Activated naive CD4-positive, alpha-beta T cell treated with anti-CD3 and anti-CD28 coated beads for 36 hours (primary cell): ENCODE measurements at regions of chr12 and their contacts with region 1.

Region 1: DNA sequence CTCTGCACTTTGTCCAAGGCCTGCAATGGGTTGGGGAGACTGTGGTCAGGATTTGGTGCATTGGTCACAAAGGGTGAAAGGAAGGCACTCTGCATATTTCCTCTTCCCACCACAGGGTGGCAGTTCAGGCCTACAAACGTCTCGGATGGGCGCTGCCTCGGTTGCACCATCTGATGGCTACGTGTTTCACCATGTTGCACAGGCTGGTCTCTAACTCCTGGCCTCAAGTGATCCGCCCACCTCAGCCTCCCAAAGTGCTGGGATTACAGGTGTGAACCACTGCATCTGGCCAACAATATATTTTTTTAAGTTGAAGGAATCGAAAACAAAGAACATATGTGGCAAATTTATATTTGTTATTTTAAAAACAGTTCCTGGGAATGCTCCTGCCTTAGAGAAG is 35.1 kb downstream of the TMBIM6 start:
- DNase-seq: peak; percentile 80
- H3K4me3 Mint-ChIP-seq: no peak overlapping the region
- H3K27ac Mint-ChIP-seq: no peak overlapping the region
- H3K4me1 Mint-ChIP-seq: peaks cover 6% of the 10 kb centered on the region
- H3K27me3 Mint-ChIP-seq: peaks cover 3% of the 10 kb centered on the region

Region 2: DNA sequence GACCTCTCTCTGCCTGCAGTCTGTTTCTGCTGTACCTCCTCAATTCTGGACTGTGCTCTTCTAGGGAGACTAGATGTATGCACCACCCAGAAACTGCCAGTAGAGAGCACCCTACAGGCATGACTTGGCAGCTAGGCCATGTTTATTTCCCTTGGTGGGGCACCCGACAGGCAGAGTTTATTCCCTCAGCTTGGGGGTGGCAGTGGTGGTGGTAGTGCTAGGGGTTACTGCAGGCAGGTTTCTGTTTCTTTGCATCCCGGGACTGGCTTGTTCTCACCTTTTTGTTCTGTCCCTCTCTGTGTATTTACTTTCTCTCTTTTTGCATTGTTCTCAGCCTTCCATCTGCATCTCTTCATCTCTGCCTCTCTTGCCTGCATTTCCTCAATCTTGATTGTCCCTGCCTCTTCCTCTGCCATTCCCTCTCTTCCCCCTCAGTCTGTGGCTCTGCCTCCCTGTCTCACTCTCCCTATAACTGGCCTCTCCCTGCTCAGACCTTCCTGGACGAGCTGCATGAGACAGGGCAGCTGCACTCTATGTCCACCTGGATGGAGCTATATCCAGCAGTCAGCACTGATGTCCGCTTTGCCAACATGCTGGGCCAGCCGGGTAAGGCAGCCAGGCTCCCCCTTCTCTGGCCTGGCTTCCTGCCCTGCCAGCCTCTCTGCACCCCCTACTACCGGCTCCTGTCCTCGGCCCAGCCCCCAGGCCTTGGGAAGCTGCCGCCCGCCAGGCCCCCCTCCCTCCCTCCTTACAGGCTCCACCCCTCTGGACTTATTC is 139.2 kb before region 1 on chr12:
- CTCF ChIA-PET with region 1: interaction called, 32 read pairs
- intact Hi-C with region 1: loop called (anchors 2 kb)
- DNase-seq: peak; percentile 80
- H3K4me3 Mint-ChIP-seq: no peak overlapping the region
- H3K27ac Mint-ChIP-seq: no peak overlapping the region
- H3K4me1 Mint-ChIP-seq: peaks cover 14% of the 10 kb centered on the region
- H3K27me3 Mint-ChIP-seq: no peaks in the 10 kb centered on the region

Region 3: DNA sequence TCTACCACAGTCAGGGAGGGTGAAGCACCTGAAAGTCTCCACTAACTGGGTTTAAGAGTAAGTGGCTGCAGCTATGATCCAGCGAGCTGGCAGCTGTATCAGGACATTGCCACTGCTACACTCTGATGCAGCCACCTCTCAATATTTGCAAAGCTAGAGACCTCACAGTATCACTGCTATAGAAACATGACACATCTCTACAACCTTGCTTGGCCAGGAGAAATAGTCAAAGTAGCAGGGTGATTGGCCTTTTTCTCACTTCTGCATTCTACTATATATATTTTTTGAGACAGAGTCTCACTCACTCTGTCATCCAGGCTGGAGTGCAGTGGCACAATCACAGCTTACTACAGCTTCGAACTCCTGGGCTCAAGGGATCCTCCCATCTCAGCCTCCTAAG is 59.9 kb before region 1 on chr12:
- CTCF ChIA-PET with region 1: interaction called, 24 read pairs
- intact Hi-C with region 1: no loop called
- DNase-seq: no peak
- H3K4me3 Mint-ChIP-seq: no peak overlapping the region
- H3K27ac Mint-ChIP-seq: no peak overlapping the region
- H3K4me1 Mint-ChIP-seq: no peaks in the 10 kb centered on the region
- H3K27me3 Mint-ChIP-seq: peaks cover 2% of the 10 kb centered on the region

Region 4: DNA sequence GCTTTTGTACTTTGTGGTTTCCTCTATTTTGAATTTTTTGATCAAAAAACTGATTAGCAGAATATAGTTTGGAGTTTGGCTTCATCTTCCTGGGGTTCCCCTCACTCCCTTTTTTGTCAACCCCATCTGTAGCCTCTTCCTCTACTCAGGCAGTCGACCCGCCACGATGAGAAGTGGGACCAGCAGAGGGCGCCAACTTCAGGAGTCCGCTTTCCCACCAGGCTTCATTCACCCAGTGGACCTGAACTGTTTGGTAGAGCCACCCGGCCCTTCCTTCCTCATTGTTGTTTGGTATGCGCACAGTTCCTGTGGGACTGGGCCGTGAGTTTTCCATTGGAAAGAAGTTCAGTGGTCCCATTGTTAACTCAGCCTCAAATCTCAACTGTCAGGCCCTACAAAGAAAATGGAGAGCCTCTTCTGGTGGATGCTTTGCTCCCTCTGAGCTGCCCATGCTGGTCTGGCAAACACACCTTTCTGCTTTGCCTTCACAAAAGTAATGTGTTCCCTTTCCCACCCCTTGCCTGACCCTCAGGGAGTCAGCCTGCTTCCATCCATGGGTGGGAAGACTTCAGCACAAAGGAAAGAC is 13.3 kb before region 1 on chr12:
- CTCF ChIA-PET with region 1: interaction called, 37 read pairs
- intact Hi-C with region 1: no loop called
- DNase-seq: peak; percentile 91
- H3K4me3 Mint-ChIP-seq: no peak overlapping the region
- H3K27ac Mint-ChIP-seq: peak overlapping the region; percentile 76
- H3K4me1 Mint-ChIP-seq: peaks cover 61% of the 10 kb centered on the region
- H3K27me3 Mint-ChIP-seq: no peaks in the 10 kb centered on the region

Region 5: GRCh38 chr12:49828133-49829091 is 52.0 kb after region 1 on chr12 and contains the start of gene NCKAP5L:
- CTCF ChIA-PET with region 1: interaction called, 11 read pairs
- intact Hi-C with region 1: no loop called
- DNase-seq: peak; percentile 94
- H3K4me3 Mint-ChIP-seq: peak within 1 kb of the TSS; percentile 92
- H3K27ac Mint-ChIP-seq: peak within 1 kb of the TSS; percentile 86
- H3K4me1 Mint-ChIP-seq: peaks cover 27% of the 10 kb centered on the region
- H3K27me3 Mint-ChIP-seq: no peaks in the 10 kb centered on the region
- total RNA-seq, gene NCKAP5L: 2.8 TPM

Region 6: DNA sequence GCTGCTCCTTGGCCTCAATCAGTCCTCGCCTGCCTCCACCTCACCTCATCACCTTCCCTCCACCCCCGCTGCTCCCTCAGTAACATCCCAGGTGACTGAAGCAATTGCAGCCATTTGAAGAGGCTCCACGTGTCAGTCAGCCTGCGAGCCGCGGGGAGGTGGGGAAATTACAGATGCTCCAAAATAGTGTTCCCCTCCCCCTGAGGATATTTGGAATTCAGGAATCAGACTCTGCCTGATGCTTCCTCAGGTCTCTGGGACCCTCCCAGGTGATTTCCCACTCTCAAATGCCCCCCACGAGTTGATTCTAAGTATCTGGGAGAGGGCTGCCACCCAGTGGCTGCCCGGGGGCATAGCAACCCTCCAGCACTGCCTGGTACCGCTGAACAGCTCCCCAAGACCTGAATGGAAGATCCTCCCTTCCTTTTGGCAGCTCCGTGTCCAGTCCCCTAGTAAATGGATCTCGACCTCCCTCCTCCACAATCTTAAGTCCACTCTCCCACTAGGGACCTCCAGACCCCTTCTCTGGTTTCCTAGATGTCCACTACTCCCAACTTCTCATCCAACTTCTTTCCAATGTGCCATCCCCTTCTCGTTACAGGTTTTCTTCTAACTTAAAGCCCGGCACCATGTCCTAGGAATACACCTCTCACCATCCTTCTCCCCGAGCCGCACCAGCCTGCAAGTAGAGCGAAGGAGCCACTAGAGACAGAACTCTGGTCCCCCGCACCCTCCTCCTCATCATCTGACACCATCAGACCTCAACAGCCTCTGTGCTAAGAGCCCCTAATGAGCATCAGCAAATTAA is 279.6 kb after region 1 on chr12:
- CTCF ChIA-PET with region 1: interaction called, 5 read pairs
- intact Hi-C with region 1: loop called (anchors 5 kb)
- DNase-seq: peak; percentile 70
- H3K4me3 Mint-ChIP-seq: peak overlapping the region; percentile 39
- H3K27ac Mint-ChIP-seq: no peak overlapping the region
- H3K4me1 Mint-ChIP-seq: peaks cover 33% of the 10 kb centered on the region
- H3K27me3 Mint-ChIP-seq: peaks cover 41% of the 10 kb centered on the region